ENCODE measurements at regions of chr11 and their contacts with region 1.

Region 1: DNA sequence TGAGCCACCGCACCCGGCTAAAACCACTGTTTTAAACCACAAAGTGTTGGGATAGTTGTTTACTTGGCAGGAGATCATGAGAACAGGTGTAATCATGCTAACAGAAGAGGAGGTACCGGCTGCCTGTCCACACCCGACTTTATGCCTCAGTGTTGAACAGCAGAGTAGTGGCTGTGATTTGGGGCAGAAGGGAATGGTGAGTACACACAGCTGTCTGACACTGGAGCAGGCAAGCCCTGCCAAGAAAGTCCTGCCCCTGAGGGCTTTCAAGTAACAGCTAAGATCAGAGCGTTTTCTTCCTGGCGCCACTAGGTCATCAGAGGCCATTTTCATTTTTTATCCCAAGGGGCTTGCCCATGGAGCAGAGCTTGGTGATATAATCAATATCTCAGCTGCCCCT is 8.1 kb downstream of the CDKN1C start:
- DNase-seq: no peak
- ATAC-seq: no peak
- H3K4me3 ChIP-seq: no peak overlapping the region
- H3K27ac ChIP-seq: no peak overlapping the region
- H3K4me1 ChIP-seq: no peaks in the 10 kb centered on the region
- H3K27me3 ChIP-seq: no peaks in the 10 kb centered on the region
- CTCF ChIP-seq: no peak
- POLR2A ChIP-seq: no peak

Region 2: GRCh38 chr11:2537896-2538724 is 339.4 kb before region 1 on chr11:
- intact Hi-C with region 1: loop called (anchors 5 kb)
- DNase-seq: peak in 2 of 4 donors; percentile 2 to 7
- ATAC-seq: no peak
- H3K4me3 ChIP-seq: no peak overlapping the region
- H3K27ac ChIP-seq: no peak overlapping the region
- H3K4me1 ChIP-seq: peaks cover 6% of the 10 kb centered on the region
- H3K27me3 ChIP-seq: no peaks in the 10 kb centered on the region
- CTCF ChIP-seq: no peak
- POLR2A ChIP-seq: no peak

Measured in body of pancreas (tissue), 4 donors.